Naive thymus-derived CD4-positive, alpha-beta T cell (primary cell): ENCODE measurements at regions of chr14 and their contacts with region 1.

Region 1: GRCh38 chr14:65412032-65412846 is at the start of gene FUT8:
- DNase-seq: peak; percentile 90 to 97 (median 95)
- ATAC-seq: peak; percentile 93
- H3K4me3 ChIP-seq: peak within 1 kb of the TSS; percentile 92
- H3K4me3 Mint-ChIP-seq: peak within 1 kb of the TSS; percentile 85 to 99 (median 97)
- H3K27ac ChIP-seq: peak within 1 kb of the TSS; percentile 86
- H3K27ac Mint-ChIP-seq: peak within 1 kb of the TSS; percentile 93 to 99 (median 96)
- H3K4me1 ChIP-seq: peaks cover 0 to 14% of the 10 kb centered on the region in 2 donors
- H3K4me1 Mint-ChIP-seq: peaks cover 23 to 52% (median 48%) of the 10 kb centered on the region in 7 donors
- H3K27me3 ChIP-seq: no peaks in the 10 kb centered on the region
- H3K27me3 Mint-ChIP-seq: no peaks in the 10 kb centered on the region
- total RNA-seq, gene FUT8: 38.4 to 107 (median 43.4) TPM

Region 2: GRCh38 chr14:64914237-64914971 is 497.8 kb before region 1 on chr14 and contains the start of gene CHURC1:
- CTCF ChIA-PET with region 1: no interaction called
- POLR2A ChIA-PET with region 1: interaction called, 3 read pairs
- intact Hi-C with region 1: loop called in 1 of 2 experiments (anchors 1 kb)
- DNase-seq: peak; percentile 83 to 99 (median 94)
- ATAC-seq: peak; percentile 98
- H3K4me3 ChIP-seq: peak within 1 kb of the TSS; percentile 96
- H3K4me3 Mint-ChIP-seq: peak within 1 kb of the TSS; percentile 87 to 97 (median 92)
- H3K27ac ChIP-seq: peak within 1 kb of the TSS; percentile 99
- H3K27ac Mint-ChIP-seq: peak within 1 kb of the TSS; percentile 93 to 99 (median 97)
- H3K4me1 ChIP-seq: peaks cover 33 to 37% of the 10 kb centered on the region in 2 donors
- H3K4me1 Mint-ChIP-seq: peaks cover 42 to 60% (median 51%) of the 10 kb centered on the region in 7 donors
- H3K27me3 ChIP-seq: no peaks in the 10 kb centered on the region
- H3K27me3 Mint-ChIP-seq: peaks cover 0 to 13% (median 0%) of the 10 kb centered on the region in 5 donors
- total RNA-seq, gene CHURC1: 71.9 to 117 (median 80.7) TPM

Region 3: DNA sequence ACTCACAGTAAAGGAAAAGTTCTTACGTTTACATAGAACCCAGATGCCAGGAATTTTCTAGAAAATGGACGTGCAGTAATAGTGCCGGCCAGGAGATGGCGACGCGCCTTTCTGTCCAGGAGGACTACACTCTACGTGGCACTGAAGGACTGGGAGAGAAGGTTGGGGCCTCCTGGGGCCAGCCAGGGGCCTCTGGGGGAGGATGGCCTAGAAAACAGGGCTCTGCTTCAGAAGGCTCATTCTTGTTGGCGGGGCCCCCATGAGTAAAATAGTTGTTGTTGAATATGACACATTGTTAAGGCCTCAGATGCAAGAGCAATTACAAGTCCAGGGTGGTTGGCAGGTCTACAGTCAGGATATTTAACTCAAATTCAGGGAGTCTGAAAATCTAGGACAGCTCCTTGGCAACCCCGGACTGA is 189.8 kb before region 1 on chr14:
- CTCF ChIA-PET with region 1: interaction called, 20 read pairs
- POLR2A ChIA-PET with region 1: interaction called, 7 read pairs
- intact Hi-C with region 1: loop called (anchors 1 kb)
- DNase-seq: peak in 8 of 9 donors; percentile 19 to 57 (median 44)
- ATAC-seq: peak; percentile 84
- H3K4me3 ChIP-seq: no peak overlapping the region
- H3K4me3 Mint-ChIP-seq: peak overlapping the region in 5 of 10 donors; percentile 11 to 56 (median 25)
- H3K27ac ChIP-seq: no peak overlapping the region
- H3K27ac Mint-ChIP-seq: peak overlapping the region in 3 of 9 donors; percentile 43 to 83 (median 67)
- H3K4me1 ChIP-seq: peaks cover 4 to 18% of the 10 kb centered on the region in 2 donors
- H3K4me1 Mint-ChIP-seq: peaks cover 11 to 55% (median 44%) of the 10 kb centered on the region in 7 donors
- H3K27me3 ChIP-seq: no peaks in the 10 kb centered on the region
- H3K27me3 Mint-ChIP-seq: no peaks in the 10 kb centered on the region

Region 4: DNA sequence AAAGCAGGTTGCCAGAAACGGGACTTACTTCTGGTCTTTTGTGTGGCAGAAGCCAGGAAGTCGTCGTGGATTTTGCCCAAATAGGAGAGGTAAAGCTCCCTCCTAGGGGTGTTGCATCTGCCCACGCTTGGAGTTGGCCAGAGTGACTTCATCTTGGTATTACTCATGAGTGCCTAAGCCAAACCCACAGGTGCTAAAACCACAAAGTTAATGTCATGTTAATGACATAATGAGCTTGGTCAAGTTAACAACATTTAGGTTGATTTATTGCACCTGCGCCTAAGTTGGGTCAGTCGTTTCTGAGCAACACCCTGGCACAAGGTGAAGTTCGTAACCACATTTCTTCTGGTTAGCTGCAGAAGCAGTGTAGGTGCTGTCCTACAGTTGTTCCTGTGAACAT is 225.5 kb after region 1 on chr14:
- CTCF ChIA-PET with region 1: no interaction called
- POLR2A ChIA-PET with region 1: no interaction called
- intact Hi-C with region 1: loop called in 1 of 2 experiments (anchors 10 kb)
- DNase-seq: peak in 1 of 9 donors; percentile 52
- ATAC-seq: peak; percentile 68
- H3K4me3 ChIP-seq: no peak overlapping the region
- H3K4me3 Mint-ChIP-seq: peak overlapping the region in 1 of 10 donors; percentile 48
- H3K27ac ChIP-seq: no peak overlapping the region
- H3K27ac Mint-ChIP-seq: peak overlapping the region in 2 of 9 donors; percentile 65 to 71
- H3K4me1 ChIP-seq: peaks cover 0 to 19% of the 10 kb centered on the region in 2 donors
- H3K4me1 Mint-ChIP-seq: peaks cover 22 to 41% (median 33%) of the 10 kb centered on the region in 7 donors
- H3K27me3 ChIP-seq: no peaks in the 10 kb centered on the region
- H3K27me3 Mint-ChIP-seq: no peaks in the 10 kb centered on the region

Region 5: GRCh38 chr14:65927931-65928356 is 515.7 kb after region 1 on chr14:
- CTCF ChIA-PET with region 1: interaction called, 3 read pairs
- POLR2A ChIA-PET with region 1: interaction called, 5 read pairs
- intact Hi-C with region 1: loop called in 1 of 2 experiments (anchors 10 kb)
- DNase-seq: peak; percentile 31 to 77 (median 70)
- ATAC-seq: peak; percentile 92
- H3K4me3 ChIP-seq: peak overlapping the region; percentile 5
- H3K4me3 Mint-ChIP-seq: peak overlapping the region; percentile 68 to 80 (median 73)
- H3K27ac ChIP-seq: peak overlapping the region; percentile 52
- H3K27ac Mint-ChIP-seq: peak overlapping the region; percentile 84 to 98 (median 92)
- H3K4me1 ChIP-seq: peaks cover 47 to 51% of the 10 kb centered on the region in 2 donors
- H3K4me1 Mint-ChIP-seq: peaks cover 45 to 72% (median 61%) of the 10 kb centered on the region in 7 donors
- H3K27me3 ChIP-seq: no peaks in the 10 kb centered on the region
- H3K27me3 Mint-ChIP-seq: no peaks in the 10 kb centered on the region

Region 6: GRCh38 chr14:66240092-66240491 is 827.9 kb after region 1 on chr14:
- CTCF ChIA-PET with region 1: no interaction called
- POLR2A ChIA-PET with region 1: no interaction called
- intact Hi-C with region 1: no loop called
- DNase-seq: no peak
- ATAC-seq: no peak
- H3K4me3 ChIP-seq: no peak overlapping the region
- H3K4me3 Mint-ChIP-seq: no peak overlapping the region
- H3K27ac ChIP-seq: no peak overlapping the region
- H3K27ac Mint-ChIP-seq: no peak overlapping the region
- H3K4me1 ChIP-seq: no peaks in the 10 kb centered on the region
- H3K4me1 Mint-ChIP-seq: no peaks in the 10 kb centered on the region
- H3K27me3 ChIP-seq: no peaks in the 10 kb centered on the region
- H3K27me3 Mint-ChIP-seq: peaks cover 4 to 17% (median 11%) of the 10 kb centered on the region in 5 donors

Region 7: GRCh38 chr14:66306101-66306500 is 893.9 kb after region 1 on chr14:
- CTCF ChIA-PET with region 1: no interaction called
- POLR2A ChIA-PET with region 1: no interaction called
- intact Hi-C with region 1: no loop called
- DNase-seq: no peak
- ATAC-seq: no peak
- H3K4me3 ChIP-seq: no peak overlapping the region
- H3K4me3 Mint-ChIP-seq: no peak overlapping the region
- H3K27ac ChIP-seq: no peak overlapping the region
- H3K27ac Mint-ChIP-seq: no peak overlapping the region
- H3K4me1 ChIP-seq: no peaks in the 10 kb centered on the region
- H3K4me1 Mint-ChIP-seq: no peaks in the 10 kb centered on the region
- H3K27me3 ChIP-seq: no peaks in the 10 kb centered on the region
- H3K27me3 Mint-ChIP-seq: no peaks in the 10 kb centered on the region

Region 8: GRCh38 chr14:66395300-66395699 is 983.1 kb after region 1 on chr14:
- CTCF ChIA-PET with region 1: no interaction called
- POLR2A ChIA-PET with region 1: no interaction called
- intact Hi-C with region 1: loop called in 1 of 2 experiments (anchors 10 kb)
- DNase-seq: peak in 4 of 9 donors; percentile 1 to 26 (median 18)
- ATAC-seq: peak; percentile 74
- H3K4me3 ChIP-seq: no peak overlapping the region
- H3K4me3 Mint-ChIP-seq: no peak overlapping the region
- H3K27ac ChIP-seq: no peak overlapping the region
- H3K27ac Mint-ChIP-seq: no peak overlapping the region
- H3K4me1 ChIP-seq: peaks cover 0 to 6% of the 10 kb centered on the region in 2 donors
- H3K4me1 Mint-ChIP-seq: peaks cover 0 to 5% (median 0%) of the 10 kb centered on the region in 7 donors
- H3K27me3 ChIP-seq: no peaks in the 10 kb centered on the region
- H3K27me3 Mint-ChIP-seq: peaks cover 0 to 13% (median 0%) of the 10 kb centered on the region in 5 donors

Region 9: GRCh38 chr14:67359775-67360648 is 1947.8 kb after region 1 on chr14 and contains the starts of genes ATP6V1D and EIF2S1:
- CTCF ChIA-PET with region 1: no interaction called
- POLR2A ChIA-PET with region 1: no interaction called
- intact Hi-C with region 1: loop called in 1 of 2 experiments (anchors 5 kb)
- DNase-seq: peak; percentile 97 to 100 (median 100)
- ATAC-seq: peak; percentile 94
- H3K4me3 ChIP-seq: peak within 1 kb of the TSS; percentile 87
- H3K4me3 Mint-ChIP-seq: peak within 1 kb of the TSS; percentile 93 to 99 (median 98)
- H3K27ac ChIP-seq: peak within 1 kb of the TSS; percentile 82
- H3K27ac Mint-ChIP-seq: peak within 1 kb of the TSS; percentile 94 to 99 (median 96)
- H3K4me1 ChIP-seq: peaks cover 24 to 38% of the 10 kb centered on the region in 2 donors
- H3K4me1 Mint-ChIP-seq: peaks cover 43 to 94% (median 85%) of the 10 kb centered on the region in 7 donors
- H3K27me3 ChIP-seq: no peaks in the 10 kb centered on the region
- H3K27me3 Mint-ChIP-seq: peaks cover 0 to 5% (median 0%) of the 10 kb centered on the region in 5 donors
- total RNA-seq, gene ATP6V1D: 28.5 to 41.5 (median 33.4) TPM
- total RNA-seq, gene EIF2S1: 41.4 to 115 (median 49.4) TPM